Activated CD8-positive, alpha-beta T cell treated with anti-CD3 and anti-CD28 coated beads, Interleukin-2, amount 10 ng/mL, durations not matched to agents 7 days and 5 days (primary cell): ENCODE measurements at regions of chr11 and their contacts with region 1.

Region 1: DNA sequence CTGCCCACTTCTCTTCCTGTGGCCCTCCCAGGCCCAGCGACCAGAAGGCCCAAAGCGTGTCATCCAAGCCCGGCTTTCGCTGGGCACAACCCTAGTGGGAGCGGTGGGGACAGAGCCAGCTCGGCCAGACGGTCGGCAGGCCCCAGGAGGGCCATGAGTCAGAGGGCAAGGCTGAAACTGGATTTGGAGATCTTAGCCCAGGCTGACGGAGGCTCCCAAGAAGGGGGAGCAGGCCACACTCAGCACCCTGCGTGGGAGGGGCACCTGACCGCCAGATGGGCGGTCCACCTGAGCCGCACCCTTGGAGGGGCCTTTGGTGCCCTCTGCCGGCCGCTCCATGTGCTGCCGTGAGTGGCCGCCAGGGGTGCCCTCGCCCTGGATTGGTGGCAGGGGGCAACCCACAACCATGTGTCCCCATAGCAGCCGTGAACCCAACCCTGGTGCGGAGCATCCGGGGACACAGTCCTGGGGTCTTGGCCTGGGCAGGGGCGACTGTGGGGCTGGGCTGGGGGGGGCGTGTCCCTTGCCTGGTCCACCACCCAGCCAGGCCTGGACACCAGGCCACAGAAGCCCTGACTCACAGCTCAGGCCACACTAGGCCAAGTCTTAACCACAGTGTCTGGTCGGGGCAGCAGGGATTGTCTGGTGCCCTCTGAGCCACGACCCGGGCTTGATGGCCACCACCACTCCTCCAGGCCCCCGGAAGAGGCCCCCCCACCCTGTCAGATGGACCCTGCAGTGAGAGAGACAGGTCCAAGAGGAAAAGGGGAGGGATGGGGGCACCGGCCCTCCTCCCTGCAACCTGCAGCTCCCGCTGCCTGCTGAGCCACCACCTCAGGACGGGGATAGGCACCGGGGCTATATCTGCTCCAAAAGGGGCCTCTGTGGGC is 19.2 kb upstream of the TALDO1 start:
- DNase-seq: peak; percentile 88
- ATAC-seq: peak; percentile 72
- H3K4me3 Mint-ChIP-seq: no peak overlapping the region
- H3K27ac Mint-ChIP-seq: no peak overlapping the region
- H3K4me1 Mint-ChIP-seq: peaks cover 16% of the 10 kb centered on the region
- H3K27me3 Mint-ChIP-seq: peaks cover 5% of the 10 kb centered on the region

Region 2: DNA sequence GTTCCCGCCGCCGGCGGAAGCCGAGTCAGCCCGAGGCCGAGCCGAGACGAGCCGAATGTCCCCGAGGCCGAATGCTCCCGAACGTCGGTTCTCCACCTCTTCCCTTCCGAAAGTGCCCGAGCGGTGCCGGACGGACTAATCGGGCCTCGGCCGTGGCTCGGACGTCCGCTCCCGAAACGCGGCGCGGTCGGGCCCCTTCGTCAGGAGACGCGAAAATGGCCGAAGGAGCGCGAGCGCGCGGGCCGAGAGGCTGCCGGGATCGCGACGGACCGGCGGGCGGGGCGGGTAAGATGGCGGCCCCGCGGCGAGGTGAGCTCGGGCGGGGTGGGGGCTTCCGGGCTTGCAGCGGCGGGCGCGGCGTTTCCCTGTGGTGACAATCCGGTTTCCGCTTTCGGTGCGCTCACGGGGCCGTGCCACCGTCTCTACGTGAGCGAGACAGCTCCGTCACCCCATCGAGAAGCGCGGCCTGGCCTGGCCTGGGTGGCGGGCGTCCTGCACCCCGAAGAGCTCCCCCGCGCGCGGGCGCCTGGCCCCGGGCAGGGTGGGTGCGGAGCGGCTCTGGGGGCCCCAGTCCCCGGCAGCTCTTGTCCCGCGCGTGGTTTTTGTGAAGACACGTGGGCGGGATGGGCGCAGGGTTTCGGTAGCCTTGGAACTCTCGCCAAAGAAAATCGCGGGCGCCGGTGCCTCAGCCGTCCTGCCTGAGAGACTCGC is 32.4 kb before region 1 on chr11 and contains the start of gene TMEM80:
- CTCF ChIA-PET with region 1: interaction called, 51 read pairs
- POLR2A ChIA-PET with region 1: interaction called, 24 read pairs
- DNase-seq: peak; percentile 99
- ATAC-seq: peak; percentile 81
- H3K4me3 Mint-ChIP-seq: peak within 1 kb of the TSS; percentile 89
- H3K27ac Mint-ChIP-seq: peak within 1 kb of the TSS; percentile 96
- H3K4me1 Mint-ChIP-seq: peaks cover 59% of the 10 kb centered on the region
- H3K27me3 Mint-ChIP-seq: no peaks in the 10 kb centered on the region
- total RNA-seq, gene TMEM80: 27.1 to 29.8 TPM

Region 3: GRCh38 chr11:747158-748006 is 19.3 kb after region 1 on chr11 and contains the start of gene TALDO1:
- CTCF ChIA-PET with region 1: interaction called, 12 read pairs
- POLR2A ChIA-PET with region 1: interaction called, 7 read pairs
- DNase-seq: peak; percentile 86
- ATAC-seq: peak; percentile 92
- H3K4me3 Mint-ChIP-seq: peak within 1 kb of the TSS; percentile 83
- H3K27ac Mint-ChIP-seq: peak within 1 kb of the TSS; percentile 81
- H3K4me1 Mint-ChIP-seq: peaks cover 23% of the 10 kb centered on the region
- H3K27me3 Mint-ChIP-seq: no peaks in the 10 kb centered on the region
- total RNA-seq, gene TALDO1: 278 to 289 TPM

Region 4: DNA sequence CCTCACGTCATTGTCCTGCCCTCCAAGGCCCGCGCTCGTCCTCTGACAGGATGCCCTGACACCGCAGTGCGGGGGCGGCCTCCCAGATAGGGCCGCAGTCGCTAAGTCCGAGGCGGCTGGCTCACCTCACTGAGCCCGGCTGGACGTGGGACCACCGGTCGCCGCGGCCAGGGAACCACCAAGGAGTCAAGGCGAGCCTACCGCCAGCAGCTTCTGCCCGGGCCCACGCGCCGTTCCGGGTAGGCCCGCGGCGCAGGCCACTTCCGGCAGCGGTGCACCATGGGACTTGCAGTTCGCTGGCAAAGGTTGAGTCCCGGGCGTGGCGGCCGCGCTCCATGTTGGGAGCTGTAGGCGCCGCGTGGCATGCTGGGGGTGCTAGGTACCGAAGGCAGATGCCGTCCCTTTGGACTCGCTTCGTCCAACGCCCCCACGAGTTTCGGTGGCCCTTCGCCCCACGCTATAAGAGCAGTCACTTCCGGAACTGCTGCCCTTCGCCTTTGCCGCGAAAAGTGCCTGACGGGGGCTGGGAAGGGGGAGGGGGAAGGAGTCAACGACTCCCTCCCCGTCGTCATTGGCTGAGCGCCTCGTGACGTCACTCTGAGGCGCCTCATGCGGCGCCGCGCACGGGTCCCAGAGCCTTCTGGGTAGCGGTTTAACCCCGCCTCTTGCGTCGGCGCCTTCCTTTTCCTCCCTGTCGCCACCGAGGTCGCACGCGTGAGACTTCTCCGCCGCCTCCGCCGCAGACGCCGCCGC is 81.4 kb after region 1 on chr11 and contains the start of gene RPLP2:
- CTCF ChIA-PET with region 1: no interaction called
- POLR2A ChIA-PET with region 1: interaction called, 10 read pairs
- DNase-seq: peak; percentile 98
- ATAC-seq: peak; percentile 85
- H3K4me3 Mint-ChIP-seq: peak within 1 kb of the TSS; percentile 93
- H3K27ac Mint-ChIP-seq: peak within 1 kb of the TSS; percentile 97
- H3K4me1 Mint-ChIP-seq: peaks cover 45% of the 10 kb centered on the region
- H3K27me3 Mint-ChIP-seq: no peaks in the 10 kb centered on the region
- total RNA-seq, gene RPLP2: 2,268 to 2,338 TPM